MCF 10A (cell line): ENCODE measurements at regions of chr21 and their contacts with region 1.

Region 1: DNA sequence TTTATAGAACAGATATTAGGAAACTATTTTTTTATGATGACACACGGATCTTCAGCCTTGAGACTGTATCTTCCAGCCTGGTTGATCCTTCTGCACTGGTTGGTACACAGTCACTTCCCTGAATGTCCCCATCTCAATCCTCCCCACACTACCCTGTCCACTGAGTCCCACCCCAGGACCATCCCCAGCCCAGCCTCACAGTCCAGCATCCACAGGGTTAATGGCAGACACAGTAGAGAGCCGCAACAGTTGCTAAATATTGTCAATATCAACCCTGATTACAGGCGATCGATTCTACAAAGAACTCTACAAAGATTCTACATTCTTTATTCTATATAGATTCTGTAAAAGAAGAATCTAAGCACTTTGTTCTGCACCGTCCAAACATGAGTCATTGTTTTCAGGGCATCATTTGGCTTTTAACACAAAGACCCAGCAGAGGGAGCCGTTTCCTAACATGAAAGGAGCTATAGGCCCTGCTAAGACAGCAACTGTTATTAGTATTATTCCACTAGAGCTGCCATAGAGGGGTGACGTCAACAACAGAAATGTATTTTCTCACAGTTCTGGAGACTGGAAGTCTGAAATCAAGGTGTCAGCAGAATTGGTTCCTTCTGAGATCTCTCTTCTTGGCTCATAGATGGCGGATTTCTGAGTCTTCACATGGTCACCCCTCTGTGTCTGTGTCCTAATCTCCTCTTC is 30.1 kb upstream of the IFNAR2 start:
- DNase-seq: peak; percentile 96
- H3K4me3 Mint-ChIP-seq: no peak overlapping the region
- H3K27ac Mint-ChIP-seq: no peak overlapping the region
- H3K4me1 Mint-ChIP-seq: peaks cover 20% of the 10 kb centered on the region
- H3K27me3 Mint-ChIP-seq: peaks cover 20% of the 10 kb centered on the region
- CTCF ChIP-seq: peak; percentile 76

Region 2: DNA sequence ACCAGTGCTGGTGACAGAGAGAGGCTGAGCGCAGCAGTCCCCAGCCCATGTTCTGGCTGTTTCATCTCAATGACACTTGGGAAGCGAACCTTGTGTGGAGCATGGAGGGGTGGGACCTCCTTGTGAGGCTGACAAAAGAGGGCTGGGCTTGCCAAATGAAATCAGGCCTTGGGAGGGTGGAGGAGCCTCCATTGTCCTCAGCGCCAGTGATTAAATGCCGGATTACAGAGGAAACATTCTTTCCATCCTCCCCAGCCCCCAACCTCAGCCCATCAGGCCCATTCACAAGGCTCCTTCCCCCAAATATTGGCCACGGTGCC is 364.8 kb before region 1 on chr21:
- CTCF ChIA-PET with region 1: interaction called, 38 read pairs
- POLR2A ChIA-PET with region 1: interaction called, 3 read pairs
- intact Hi-C with region 1: loop called (anchors 5 kb)
- DNase-seq: no peak
- H3K4me3 Mint-ChIP-seq: no peak overlapping the region
- H3K27ac Mint-ChIP-seq: no peak overlapping the region
- H3K4me1 Mint-ChIP-seq: no peaks in the 10 kb centered on the region
- H3K27me3 Mint-ChIP-seq: peaks cover 29% of the 10 kb centered on the region
- CTCF ChIP-seq: no peak

Region 3: DNA sequence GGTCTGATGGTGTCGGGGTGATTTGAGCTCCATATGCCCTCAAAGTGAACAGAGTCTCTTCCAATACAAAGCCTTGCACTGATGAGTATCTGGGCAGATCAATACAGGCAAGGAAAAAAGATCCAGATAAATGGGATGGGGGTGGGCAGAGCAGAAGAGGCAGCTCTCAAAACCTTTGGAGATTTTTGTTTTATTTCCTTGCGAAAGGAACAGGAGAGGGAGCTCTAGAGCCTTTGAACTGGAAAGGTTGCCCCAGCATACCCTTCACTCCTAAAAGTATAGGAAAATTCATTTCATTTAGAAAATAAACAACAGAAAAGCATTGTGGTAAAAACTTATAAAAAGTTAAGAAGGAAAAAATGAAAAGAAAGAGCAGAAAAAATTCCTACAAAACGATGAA is 205.4 kb before region 1 on chr21:
- CTCF ChIA-PET with region 1: interaction called, 41 read pairs
- POLR2A ChIA-PET with region 1: interaction called, 4 read pairs
- intact Hi-C with region 1: loop called (anchors 1 kb)
- DNase-seq: peak; percentile 40
- H3K4me3 Mint-ChIP-seq: no peak overlapping the region
- H3K27ac Mint-ChIP-seq: no peak overlapping the region
- H3K4me1 Mint-ChIP-seq: peaks cover 7% of the 10 kb centered on the region
- H3K27me3 Mint-ChIP-seq: peaks cover 64% of the 10 kb centered on the region
- CTCF ChIP-seq: peak; percentile 56

Region 4: DNA sequence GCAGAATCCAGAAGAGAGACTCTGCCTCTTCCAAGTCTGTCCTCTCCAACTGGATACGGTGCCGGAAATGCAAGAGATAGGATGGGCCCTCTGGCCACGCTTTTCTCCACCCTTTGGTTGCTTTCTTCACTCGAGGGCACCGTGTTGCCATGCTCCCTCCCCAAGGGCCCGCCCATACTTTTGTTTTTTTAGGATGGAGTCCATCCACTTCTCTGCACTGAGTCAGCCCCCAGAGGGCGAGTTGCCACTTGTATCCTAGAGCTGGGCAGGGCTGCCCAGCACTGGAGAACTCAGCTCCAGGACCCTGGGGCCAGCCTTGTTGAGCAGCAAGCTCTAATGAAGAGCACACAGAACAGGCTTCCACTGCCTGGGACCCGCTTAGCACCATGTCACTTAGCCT is 229.0 kb after region 1 on chr21:
- CTCF ChIA-PET with region 1: interaction called, 3 read pairs
- POLR2A ChIA-PET with region 1: interaction called, 3 read pairs
- intact Hi-C with region 1: loop called (anchors 5 kb)
- DNase-seq: peak; percentile 99
- H3K4me3 Mint-ChIP-seq: peak overlapping the region; percentile 60
- H3K27ac Mint-ChIP-seq: peak overlapping the region; percentile 93
- H3K4me1 Mint-ChIP-seq: peaks cover 17% of the 10 kb centered on the region
- H3K27me3 Mint-ChIP-seq: no peaks in the 10 kb centered on the region
- CTCF ChIP-seq: no peak